MCF 10A (cell line): ENCODE measurements at regions of chr18 and their contacts with region 1.

Region 1: GRCh38 chr18:45974088-45974536 is 7.0 kb upstream of the EPG5 start:
- DNase-seq: peak; percentile 89
- H3K4me3 Mint-ChIP-seq: peak overlapping the region; percentile 55
- H3K27ac Mint-ChIP-seq: no peak overlapping the region
- H3K4me1 Mint-ChIP-seq: peaks cover 6% of the 10 kb centered on the region
- H3K27me3 Mint-ChIP-seq: no peaks in the 10 kb centered on the region
- CTCF ChIP-seq: peak; percentile 88

Region 2: DNA sequence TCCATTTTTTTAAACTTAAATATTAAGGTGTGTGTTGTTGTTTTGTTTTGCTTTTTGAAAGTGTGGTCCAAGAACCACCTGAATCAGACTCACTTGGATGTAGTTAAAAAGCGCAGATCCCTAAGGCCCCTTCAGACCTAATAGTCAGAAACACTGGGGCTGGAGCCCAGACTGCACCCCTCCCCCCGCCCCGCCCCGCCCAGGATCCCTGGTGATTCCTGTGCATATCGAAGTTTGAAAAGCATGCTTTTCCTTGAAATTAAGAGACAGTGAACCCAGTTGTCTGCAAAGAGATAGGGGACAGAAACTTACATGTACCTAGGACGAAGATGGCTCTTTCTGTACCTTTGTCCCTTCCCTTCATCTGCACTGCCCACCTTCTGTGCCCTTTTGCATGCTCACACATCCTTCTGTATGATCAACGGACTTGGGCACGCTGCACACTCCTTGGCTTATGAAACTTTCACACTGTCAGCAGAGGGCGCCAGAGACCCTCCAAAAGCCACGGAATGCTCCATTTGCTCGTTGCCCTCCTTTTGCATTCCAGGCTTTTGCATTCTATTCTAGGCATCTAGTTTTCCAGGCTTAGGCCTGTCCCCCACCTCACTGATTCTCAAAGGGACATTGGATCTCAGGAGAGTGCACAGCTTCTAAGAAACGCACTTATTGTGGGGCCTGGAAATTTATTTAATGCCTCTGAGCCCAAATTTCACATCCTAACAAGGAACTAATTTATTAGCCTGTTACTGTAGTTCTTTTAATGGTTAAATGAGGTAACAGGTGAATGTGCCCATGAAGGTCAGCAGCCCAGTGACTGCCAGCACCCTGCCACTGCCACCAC is 282.9 kb before region 1 on chr18:
- CTCF ChIA-PET with region 1: interaction called, 3 read pairs
- POLR2A ChIA-PET with region 1: no interaction called
- intact Hi-C with region 1: loop called (anchors 1 kb)
- DNase-seq: peak; percentile 86
- H3K4me3 Mint-ChIP-seq: no peak overlapping the region
- H3K27ac Mint-ChIP-seq: no peak overlapping the region
- H3K4me1 Mint-ChIP-seq: peaks cover 10% of the 10 kb centered on the region
- H3K27me3 Mint-ChIP-seq: peaks cover 11% of the 10 kb centered on the region
- CTCF ChIP-seq: peak; percentile 90

Region 3: GRCh38 chr18:45879681-45880655 is 94.1 kb before region 1 on chr18:
- CTCF ChIA-PET with region 1: interaction called, 10 read pairs
- POLR2A ChIA-PET with region 1: no interaction called
- intact Hi-C with region 1: loop called (anchors 2 kb)
- DNase-seq: peak; percentile 65
- H3K4me3 Mint-ChIP-seq: no peak overlapping the region
- H3K27ac Mint-ChIP-seq: no peak overlapping the region
- H3K4me1 Mint-ChIP-seq: no peaks in the 10 kb centered on the region
- H3K27me3 Mint-ChIP-seq: no peaks in the 10 kb centered on the region
- CTCF ChIP-seq: peak; percentile 98

Region 4: GRCh38 chr18:45920367-45920766 is 53.7 kb before region 1 on chr18:
- CTCF ChIA-PET with region 1: interaction called, 5 read pairs
- POLR2A ChIA-PET with region 1: interaction called, 3 read pairs
- intact Hi-C with region 1: loop called (anchors 2 kb)
- DNase-seq: peak; percentile 97
- H3K4me3 Mint-ChIP-seq: no peak overlapping the region
- H3K27ac Mint-ChIP-seq: no peak overlapping the region
- H3K4me1 Mint-ChIP-seq: peaks cover 16% of the 10 kb centered on the region
- H3K27me3 Mint-ChIP-seq: no peaks in the 10 kb centered on the region
- CTCF ChIP-seq: no peak

Region 5: GRCh38 chr18:45962461-45962860 is 11.7 kb before region 1 on chr18:
- CTCF ChIA-PET with region 1: interaction called, 14 read pairs
- POLR2A ChIA-PET with region 1: no interaction called
- intact Hi-C with region 1: no loop called
- DNase-seq: peak; percentile 24
- H3K4me3 Mint-ChIP-seq: no peak overlapping the region
- H3K27ac Mint-ChIP-seq: no peak overlapping the region
- H3K4me1 Mint-ChIP-seq: peaks cover 38% of the 10 kb centered on the region
- H3K27me3 Mint-ChIP-seq: no peaks in the 10 kb centered on the region
- CTCF ChIP-seq: no peak

Region 6: GRCh38 chr18:46199515-46200147 is 225.5 kb after region 1 on chr18:
- CTCF ChIA-PET with region 1: no interaction called
- POLR2A ChIA-PET with region 1: no interaction called
- intact Hi-C with region 1: no loop called
- DNase-seq: peak; percentile 54
- H3K4me3 Mint-ChIP-seq: no peak overlapping the region
- H3K27ac Mint-ChIP-seq: peak overlapping the region; percentile 67
- H3K4me1 Mint-ChIP-seq: peaks cover 9% of the 10 kb centered on the region
- H3K27me3 Mint-ChIP-seq: no peaks in the 10 kb centered on the region
- CTCF ChIP-seq: no peak